ENCODE measurements at regions of chr3 and their contacts with region 1.

Region 1: GRCh38 chr3:94336046-94336710 is 273.3 kb downstream of the NSUN3 start:
- DNase-seq: no peak

Region 2: GRCh38 chr3:94716326-94717010 is 380.3 kb after region 1 on chr3:
- intact Hi-C with region 1: loop called (anchors 5 kb)
- DNase-seq: no peak